Common myeloid progenitor, CD34-positive (primary cell): ENCODE measurements at regions of chr1 and their contacts with region 1.

Region 1: DNA sequence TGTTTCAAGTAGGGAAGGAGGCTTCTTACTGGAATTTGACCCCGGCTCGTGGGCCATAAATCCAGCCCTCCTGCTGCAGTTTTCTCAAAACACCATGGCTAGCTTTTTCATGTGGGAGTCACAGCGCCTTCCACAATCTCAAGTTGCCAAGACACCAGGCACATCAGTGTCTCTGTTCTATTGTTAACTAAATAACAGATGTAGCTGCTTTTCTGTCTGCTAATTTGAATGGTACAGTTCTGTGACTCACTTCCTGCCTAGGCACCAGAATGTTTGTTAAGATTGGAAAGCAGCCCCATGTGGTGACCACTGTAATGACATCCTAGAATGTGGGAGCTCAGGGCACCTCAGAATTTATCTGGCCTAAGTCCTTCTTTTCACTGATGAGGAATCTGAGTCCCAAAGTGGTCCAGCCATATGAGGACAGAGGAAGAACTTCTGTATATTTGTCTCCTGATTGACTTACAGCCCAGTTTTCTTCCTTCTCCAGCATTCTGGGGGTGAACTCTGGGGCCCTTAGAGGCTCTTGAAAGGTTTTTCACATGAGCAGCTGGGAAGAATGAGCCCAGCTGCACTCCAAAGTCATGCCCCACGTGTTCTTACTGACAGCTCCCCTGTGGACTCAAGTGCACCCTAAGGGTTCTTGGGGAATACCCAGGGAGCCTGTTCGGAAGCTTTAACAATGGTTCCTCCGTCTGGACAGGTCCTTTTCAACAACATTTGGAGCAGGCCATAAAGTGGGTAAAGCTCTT is 27.5 kb downstream of the TRIM45 start:
- DNase-seq: peak; percentile 32 to 78 (median 71)
- H3K4me3 ChIP-seq: no peak overlapping the region
- H3K27ac ChIP-seq: peak overlapping the region in 1 of 2 experiments; percentile 47
- H3K4me1 ChIP-seq: no peaks in the 10 kb centered on the region
- H3K27me3 ChIP-seq: no peaks in the 10 kb centered on the region

Region 2: DNA sequence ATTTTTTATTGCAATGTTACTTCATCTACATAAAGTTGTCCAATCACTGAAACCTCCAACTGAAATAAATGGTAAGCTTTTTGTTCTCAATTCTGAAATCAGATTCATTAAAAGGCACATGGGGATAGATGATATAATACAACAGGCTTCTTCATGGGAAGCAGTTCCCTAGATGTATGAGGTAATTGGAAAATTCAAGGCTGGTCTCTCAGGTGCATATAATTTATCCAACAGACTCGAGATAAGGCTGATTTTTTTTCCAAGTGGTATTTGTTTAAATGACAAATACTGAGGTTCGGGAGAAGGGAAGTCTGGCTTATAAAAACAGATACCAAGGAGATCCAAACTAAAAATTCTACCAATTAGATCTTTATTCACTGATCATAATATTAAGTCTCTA is 13.3 kb after region 1 on chr1:
- CTCF ChIA-PET with region 1: no interaction called
- POLR2A ChIA-PET with region 1: no interaction called
- DNase-seq: no peak
- H3K4me3 ChIP-seq: no peak overlapping the region
- H3K27ac ChIP-seq: no peak overlapping the region
- H3K4me1 ChIP-seq: no peaks in the 10 kb centered on the region
- H3K27me3 ChIP-seq: no peaks in the 10 kb centered on the region

Region 3: GRCh38 chr1:117128323-117129079 is 34.5 kb after region 1 on chr1:
- CTCF ChIA-PET with region 1: interaction called, 17 read pairs
- POLR2A ChIA-PET with region 1: no interaction called
- DNase-seq: peak; percentile 31 to 66 (median 63)
- H3K4me3 ChIP-seq: no peak overlapping the region
- H3K27ac ChIP-seq: no peak overlapping the region
- H3K4me1 ChIP-seq: no peaks in the 10 kb centered on the region
- H3K27me3 ChIP-seq: peaks cover 0 to 4% (median 2%) of the 10 kb centered on the region in 5 experiments

Region 4: DNA sequence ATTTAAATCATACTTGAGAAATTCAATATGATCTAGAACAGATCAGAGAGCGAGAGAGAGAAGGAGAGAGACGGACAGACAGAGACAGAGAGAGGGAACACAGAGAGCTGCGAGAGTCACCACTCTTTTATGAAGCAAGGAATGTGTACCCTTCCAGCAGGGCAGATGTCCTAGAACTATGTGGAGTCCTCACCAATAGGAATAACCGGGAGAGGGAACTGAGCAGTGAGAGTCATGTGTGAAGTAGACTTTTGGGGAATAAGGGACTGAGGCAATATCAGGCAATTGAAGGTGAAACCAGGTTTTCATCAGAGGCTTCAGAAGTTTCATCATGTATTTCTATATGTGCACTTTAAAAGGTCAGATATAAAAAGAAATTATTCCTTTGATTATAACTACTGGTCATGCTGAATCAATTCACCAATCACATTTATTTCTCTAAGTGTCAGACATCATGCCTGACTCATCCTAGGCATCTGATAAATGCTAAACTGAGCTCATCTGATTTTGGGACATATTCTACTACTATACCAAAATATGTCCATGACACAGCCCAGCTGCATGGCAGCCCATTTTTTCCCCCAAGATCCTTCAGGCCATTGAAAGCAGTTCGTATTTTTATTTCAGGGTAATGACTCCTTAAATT is 94.2 kb after region 1 on chr1:
- CTCF ChIA-PET with region 1: no interaction called
- POLR2A ChIA-PET with region 1: no interaction called
- DNase-seq: no peak
- H3K4me3 ChIP-seq: no peak overlapping the region
- H3K27ac ChIP-seq: no peak overlapping the region
- H3K4me1 ChIP-seq: peaks cover 0 to 2% (median 0%) of the 10 kb centered on the region in 4 experiments
- H3K27me3 ChIP-seq: no peaks in the 10 kb centered on the region